Left cardiac atrium (tissue), 4 donors: ENCODE measurements at regions of chr1 and their contacts with region 1.

Region 1: DNA sequence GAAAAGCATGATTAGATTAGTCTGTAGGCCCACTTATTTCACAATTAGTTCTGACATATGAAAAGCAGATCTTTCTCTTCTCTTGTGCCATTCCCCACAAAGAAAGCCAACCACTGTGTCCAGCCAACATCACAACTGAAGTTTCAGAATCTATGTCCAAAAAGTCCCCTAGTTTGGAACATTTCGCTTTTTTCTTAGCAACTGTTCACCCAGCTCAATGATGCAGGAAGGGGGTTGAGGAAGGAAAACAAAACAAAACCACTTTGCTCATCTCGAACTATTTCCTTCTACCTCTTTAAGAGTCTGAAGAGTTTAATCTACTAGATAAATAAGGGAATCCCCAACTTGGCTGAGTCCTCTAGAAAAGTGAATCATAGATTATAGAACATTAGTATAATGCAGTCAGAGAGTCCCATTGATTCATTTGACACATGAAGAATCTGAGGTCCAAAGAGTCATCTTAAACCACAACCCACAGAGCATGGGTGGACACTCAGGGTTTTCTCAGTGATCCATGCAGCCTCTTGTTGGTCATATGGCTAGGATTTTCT is 159.3 kb upstream of the SGIP1 start:
- DNase-seq: no peak
- ATAC-seq: peak; percentile 21 to 73

Region 2: DNA sequence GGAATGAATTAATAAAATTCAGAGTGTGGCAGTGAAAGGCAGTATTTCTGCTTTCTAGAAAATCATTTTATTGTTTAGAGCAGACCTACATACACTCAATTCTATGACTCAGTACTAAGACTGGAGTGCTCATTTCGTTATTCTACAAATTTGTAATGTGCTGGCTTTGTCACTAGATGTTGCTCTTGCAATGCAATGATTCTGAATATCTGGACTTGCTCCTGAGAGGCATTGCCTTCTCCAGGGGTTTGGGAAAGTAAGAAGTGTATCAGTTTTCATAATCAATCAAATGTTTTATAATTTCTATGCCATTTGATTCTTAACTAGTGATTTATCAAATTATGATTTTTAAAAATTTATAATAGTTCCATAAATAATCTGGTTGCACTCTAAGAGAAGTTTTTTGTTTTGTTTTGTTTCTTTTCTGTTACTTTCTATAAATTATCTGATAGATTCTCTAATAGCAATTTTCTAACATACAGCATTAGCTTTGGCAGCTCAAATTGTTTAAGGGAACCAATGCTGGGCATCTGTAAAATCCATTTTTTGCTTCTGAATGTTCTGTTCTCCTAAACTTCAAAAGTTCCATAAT is 121.2 kb before region 1 on chr1:
- intact Hi-C with region 1: no loop called
- DNase-seq: no peak
- ATAC-seq: peak; percentile 90 to 95

Region 3: DNA sequence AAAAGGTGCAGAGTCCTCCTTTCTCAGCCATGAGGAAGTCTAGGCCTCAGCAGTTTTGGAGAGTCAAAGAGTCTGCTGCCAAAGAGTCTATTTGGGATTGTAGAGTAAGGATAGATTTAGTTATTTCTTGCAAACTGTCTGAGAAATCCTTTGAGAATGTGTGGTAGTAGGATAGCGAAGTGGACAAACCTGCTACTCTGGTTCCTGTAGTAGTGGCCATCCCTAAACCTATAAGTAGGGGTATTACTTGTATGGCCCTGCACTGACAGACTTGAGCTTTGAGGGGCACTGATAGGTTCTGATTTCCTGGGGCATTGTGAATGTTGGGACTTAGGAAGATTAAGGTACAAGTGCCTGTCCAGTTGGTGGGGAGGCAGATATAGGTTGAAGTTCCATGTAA is 43.4 kb after region 1 on chr1:
- intact Hi-C with region 1: no loop called
- DNase-seq: no peak
- ATAC-seq: no peak

Region 4: DNA sequence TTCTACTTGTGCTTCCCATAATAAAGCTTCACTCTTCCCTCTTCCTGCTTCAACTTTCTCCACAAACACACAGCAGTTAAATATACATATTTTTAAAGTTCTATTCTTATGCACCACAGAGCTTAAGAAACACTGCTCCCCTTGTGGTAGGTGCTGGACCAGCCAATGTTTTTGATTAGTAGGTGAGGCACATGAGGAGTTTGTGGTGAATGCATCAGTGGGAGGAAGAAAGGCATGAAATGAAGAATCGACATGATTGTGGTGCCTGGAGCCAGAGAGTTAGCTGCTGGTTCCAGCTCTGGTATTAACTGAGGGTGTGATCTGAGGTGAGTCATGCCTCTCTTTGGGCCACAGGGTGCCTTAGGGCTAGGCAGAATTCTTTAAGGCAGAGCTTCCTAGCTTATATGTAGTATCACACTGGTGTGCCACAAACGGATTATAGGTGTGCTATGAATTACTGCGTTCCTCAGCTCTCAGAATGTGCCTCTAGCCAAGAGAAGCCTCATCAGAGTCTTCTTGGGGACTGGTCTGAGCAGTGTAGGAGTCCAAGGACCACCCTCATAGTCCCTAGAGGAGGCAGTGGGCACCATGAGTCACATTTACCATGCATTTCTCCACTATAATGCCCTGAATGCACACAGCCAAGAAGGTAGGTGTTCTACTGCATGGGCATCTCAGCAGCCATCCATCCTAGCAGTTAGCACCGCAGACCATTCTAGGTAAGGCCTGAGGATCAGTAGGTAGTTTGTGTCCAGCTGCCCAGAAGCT is 61.9 kb after region 1 on chr1:
- intact Hi-C with region 1: loop called in 1 of 2 experiments (anchors 10 kb)
- DNase-seq: no peak
- ATAC-seq: peak; percentile 38 to 69

Region 5: DNA sequence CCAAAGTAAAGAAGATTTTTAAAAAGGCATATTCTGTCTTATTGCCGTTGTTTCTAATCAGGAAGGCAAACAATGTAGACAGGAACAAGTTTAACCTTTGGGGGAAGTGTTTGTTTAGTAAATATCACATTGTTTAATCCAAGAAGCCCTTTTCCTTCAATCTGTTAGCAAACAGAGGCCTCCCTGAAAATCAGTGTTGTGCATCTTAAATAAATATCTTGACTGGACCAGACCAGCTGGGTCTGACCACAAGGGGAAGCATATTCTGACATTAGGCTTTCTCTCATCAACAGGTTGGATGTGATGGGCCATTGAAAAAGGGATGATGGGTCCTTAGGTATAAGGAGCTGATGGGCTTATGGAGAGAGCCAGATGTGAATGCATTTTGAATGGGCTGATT is 77.5 kb after region 1 on chr1:
- intact Hi-C with region 1: no loop called
- DNase-seq: no peak
- ATAC-seq: no peak

Region 6: DNA sequence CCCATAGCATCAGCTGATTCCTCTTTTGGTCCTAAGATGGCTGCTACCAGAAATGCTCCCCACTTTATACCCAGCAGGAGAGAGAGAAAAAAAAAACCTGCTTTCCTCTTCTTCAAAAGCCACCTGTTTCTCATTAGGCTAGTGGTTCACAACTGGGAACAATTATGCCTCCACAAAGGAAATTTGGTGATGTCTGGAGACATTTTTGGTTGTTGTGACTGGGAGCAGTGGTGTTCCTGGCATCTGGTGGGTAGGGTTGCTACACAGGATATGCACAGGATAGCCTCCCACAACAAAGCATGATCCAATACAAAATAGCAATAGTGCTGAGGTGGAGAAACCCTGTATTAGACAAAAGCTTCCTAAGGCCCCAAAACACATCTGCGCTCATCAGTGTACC is 120.9 kb after region 1 on chr1:
- intact Hi-C with region 1: no loop called
- DNase-seq: no peak
- ATAC-seq: no peak